MCF 10A (cell line): ENCODE measurements at regions of chr3 and their contacts with region 1.

Region 1: DNA sequence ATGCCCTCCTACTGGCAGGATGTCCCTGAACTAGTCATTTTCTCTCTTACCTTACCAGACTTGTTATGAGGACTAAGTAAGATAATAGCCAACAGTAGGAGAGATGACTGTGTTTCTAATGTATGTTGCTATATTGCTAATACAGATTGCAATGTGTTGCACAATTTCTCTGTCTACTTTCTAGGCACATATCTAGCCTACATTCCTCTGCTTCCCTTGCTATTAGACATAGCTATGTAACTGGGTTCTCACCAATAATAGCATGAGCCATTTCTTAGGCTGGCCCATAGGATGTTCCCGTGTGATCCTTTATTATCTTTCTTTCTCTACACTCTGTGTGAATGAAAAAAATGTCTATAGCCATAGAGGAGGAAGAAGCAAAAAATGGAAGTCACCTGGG is 6.9 kb upstream of the LRRN1 start:
- DNase-seq: no peak
- H3K4me3 Mint-ChIP-seq: no peak overlapping the region
- H3K27ac Mint-ChIP-seq: no peak overlapping the region
- H3K4me1 Mint-ChIP-seq: peaks cover 19% of the 10 kb centered on the region
- H3K27me3 Mint-ChIP-seq: no peaks in the 10 kb centered on the region
- CTCF ChIP-seq: no peak

Region 2: DNA sequence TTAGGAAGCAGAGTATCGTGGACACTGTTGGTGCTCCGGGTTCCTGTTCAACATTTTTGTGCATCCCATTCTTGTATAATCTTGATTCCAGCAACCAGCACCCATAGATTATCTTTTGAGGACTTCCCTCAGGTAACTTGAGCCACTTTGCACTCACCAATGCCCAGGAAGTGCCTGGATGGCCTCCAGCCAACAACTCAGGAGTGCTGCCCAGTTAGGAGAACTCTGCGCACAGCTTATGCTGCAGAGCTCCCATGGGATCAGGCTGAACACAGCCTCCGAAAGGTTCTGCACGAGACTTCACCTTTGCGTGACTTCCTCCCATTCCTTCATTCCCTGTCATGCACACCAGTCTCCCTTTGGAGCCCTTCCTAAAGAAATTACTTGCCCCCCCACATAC is 57.5 kb before region 1 on chr3:
- CTCF ChIA-PET with region 1: no interaction called
- POLR2A ChIA-PET with region 1: no interaction called
- intact Hi-C with region 1: loop called (anchors 2 kb)
- DNase-seq: no peak
- H3K4me3 Mint-ChIP-seq: no peak overlapping the region
- H3K27ac Mint-ChIP-seq: no peak overlapping the region
- H3K4me1 Mint-ChIP-seq: no peaks in the 10 kb centered on the region
- H3K27me3 Mint-ChIP-seq: no peaks in the 10 kb centered on the region
- CTCF ChIP-seq: no peak